Endothelial cell of umbilical vein (primary cell): ENCODE measurements at regions of chr17 and their contacts with region 1.

Region 1: DNA sequence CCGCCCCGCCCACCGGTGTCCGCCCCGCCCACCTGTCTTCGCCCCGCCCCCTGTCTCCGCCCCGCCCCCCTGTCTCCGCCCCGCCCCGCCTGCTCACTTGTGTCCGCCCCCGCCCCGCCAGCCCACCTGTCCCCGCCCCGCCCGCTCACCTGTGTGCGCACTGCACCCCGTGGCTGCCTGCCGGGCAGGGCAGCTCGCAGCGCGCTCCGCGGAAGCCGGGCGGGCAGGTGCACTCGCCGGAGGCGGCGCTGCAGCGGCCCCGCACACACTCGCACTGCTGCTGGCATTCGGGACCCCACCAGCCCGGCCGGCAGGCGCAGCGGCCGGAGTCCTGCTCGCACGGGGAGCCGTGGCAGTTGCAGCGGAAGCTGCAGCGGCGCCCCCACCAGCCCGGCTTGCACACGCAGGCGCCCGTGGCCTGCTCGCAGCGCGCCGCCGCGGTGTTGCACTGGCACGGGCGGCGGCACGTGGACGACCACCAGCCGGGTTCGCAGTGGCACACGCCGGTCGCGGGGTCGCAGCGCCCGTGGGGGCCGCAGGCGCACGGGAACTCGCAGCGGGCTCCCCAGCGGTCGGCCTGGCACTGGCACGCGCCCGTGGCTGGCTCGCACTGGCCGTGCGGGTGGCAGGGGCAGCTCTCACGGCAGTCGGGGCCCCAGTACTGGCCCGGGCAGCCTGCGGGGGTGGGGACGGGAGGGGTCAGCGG is 2.1 kb downstream of the SCARF1 start:
- DNase-seq: no peak
- H3K4me3 ChIP-seq: peak overlapping the region in 1 of 3 experiments; percentile 78
- H3K27ac ChIP-seq: peak overlapping the region; percentile 72
- H3K4me1 ChIP-seq: peaks cover 35% of the 10 kb centered on the region
- H3K27me3 ChIP-seq: no peaks in the 10 kb centered on the region
- CTCF ChIP-seq: peak; percentile 16 to 29
- POLR2A ChIP-seq: no peak

Region 2: DNA sequence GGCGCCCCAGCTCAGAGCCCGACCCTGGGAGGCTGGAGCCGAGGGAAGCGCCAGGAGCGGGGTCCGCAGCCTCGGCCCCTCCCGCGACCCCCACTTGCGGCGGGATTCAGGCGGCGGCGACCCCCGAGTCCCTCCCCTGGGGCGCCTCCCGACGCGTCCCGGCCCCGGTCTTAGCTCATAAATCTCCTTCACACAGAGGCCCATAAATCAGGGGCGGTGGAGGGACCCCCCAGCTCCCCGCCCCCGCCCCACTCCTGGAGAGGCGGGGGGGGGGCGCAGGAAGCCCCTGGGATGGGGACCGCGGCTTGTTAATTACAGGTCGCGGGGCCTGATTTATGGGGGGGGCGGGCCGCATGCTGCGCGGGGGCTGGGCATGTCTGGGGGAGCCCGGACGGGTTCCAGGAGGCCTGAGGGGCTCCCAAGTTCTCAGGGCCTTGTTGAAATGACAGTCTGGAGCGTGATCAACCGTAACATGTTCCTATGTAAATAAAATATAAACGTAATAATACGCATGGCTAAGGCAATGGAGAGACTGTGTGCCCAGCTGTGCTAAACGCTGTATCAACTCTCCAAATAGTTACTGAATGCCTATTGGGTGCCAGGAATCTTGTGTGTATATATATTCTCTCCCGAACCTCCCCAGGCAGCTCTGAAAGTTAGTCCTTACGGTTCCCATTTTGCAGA is 383.2 kb before region 1 on chr17:
- CTCF ChIA-PET with region 1: interaction called, 16 read pairs
- POLR2A ChIA-PET with region 1: no interaction called
- dilution Hi-C with region 1: no loop called
- intact Hi-C with region 1: loop called (anchors 1 kb)
- DNase-seq: no peak
- H3K4me3 ChIP-seq: peak overlapping the region in 2 of 3 experiments; percentile 31 to 32
- H3K27ac ChIP-seq: no peak overlapping the region
- H3K4me1 ChIP-seq: no peaks in the 10 kb centered on the region
- H3K27me3 ChIP-seq: peaks cover 2 to 3% of the 10 kb centered on the region in 2 experiments
- CTCF ChIP-seq: no peak
- POLR2A ChIP-seq: no peak

Region 3: GRCh38 chr17:1474402-1475189 is 168.8 kb before region 1 on chr17:
- CTCF ChIA-PET with region 1: no interaction called
- POLR2A ChIA-PET with region 1: no interaction called
- dilution Hi-C with region 1: no loop called
- intact Hi-C with region 1: no loop called
- DNase-seq: no peak
- H3K4me3 ChIP-seq: no peak overlapping the region
- H3K27ac ChIP-seq: no peak overlapping the region
- H3K4me1 ChIP-seq: no peaks in the 10 kb centered on the region
- H3K27me3 ChIP-seq: no peaks in the 10 kb centered on the region
- CTCF ChIP-seq: no peak
- POLR2A ChIP-seq: no peak

Region 4: DNA sequence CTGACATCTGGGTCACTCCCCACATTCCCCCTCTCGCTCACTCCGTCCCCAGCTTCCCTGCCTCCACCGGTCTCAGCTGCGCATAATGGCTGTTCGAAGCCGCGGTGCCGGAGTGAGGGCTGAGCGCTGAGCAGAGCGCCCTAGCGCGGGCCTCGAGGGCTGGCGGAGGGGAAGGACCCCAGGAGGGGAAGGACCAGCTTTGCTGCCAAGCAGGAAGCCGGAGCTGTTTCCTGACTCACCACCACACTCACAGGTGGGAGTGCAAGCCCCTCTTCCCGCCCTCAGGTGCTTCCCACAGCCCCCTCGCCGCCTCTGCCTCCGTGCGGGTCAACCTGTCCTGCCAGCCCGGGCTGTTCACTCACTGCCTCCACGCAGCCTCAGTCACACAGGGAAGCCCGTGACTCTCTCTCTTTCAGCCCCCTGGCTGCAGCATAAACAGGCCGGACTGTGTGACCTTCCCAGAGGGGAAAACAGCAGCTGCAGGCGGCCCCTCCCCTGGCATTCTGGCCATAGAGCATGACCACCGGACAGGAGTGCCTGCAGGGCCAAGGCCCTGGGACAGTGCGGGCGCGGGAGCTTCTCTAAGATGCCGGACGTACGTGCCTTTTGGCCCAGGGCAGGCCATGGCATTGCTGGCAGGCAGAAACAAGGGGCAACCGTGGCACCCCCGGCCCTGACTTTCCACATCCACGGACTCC is 38.5 kb before region 1 on chr17:
- CTCF ChIA-PET with region 1: interaction called, 4 read pairs
- POLR2A ChIA-PET with region 1: interaction called, 12 read pairs
- dilution Hi-C with region 1: no loop called
- intact Hi-C with region 1: no loop called
- DNase-seq: no peak
- H3K4me3 ChIP-seq: no peak overlapping the region
- H3K27ac ChIP-seq: no peak overlapping the region
- H3K4me1 ChIP-seq: no peaks in the 10 kb centered on the region
- H3K27me3 ChIP-seq: no peaks in the 10 kb centered on the region
- CTCF ChIP-seq: no peak
- POLR2A ChIP-seq: no peak

Region 5: DNA sequence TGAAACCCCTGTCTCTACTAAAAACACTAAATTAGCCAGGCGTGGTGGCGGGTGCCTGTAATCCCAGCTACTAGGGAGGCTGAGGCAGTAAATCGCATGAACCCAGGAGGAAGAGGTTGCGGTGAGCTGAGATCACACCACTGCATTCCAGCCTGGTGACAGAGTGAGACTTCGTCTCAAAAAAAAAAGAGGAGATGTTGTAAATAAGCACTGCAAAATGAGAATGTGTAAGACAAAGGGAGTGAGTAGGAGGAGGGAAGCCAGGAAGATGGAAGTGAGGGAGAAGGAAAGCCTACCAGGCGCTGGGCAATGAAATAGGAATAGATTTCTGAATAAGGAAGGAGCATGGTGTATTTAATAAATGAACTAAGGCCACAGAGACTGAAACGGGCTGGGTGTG is 49.9 kb after region 1 on chr17:
- CTCF ChIA-PET with region 1: no interaction called
- POLR2A ChIA-PET with region 1: no interaction called
- dilution Hi-C with region 1: no loop called
- intact Hi-C with region 1: no loop called
- DNase-seq: no peak
- H3K4me3 ChIP-seq: no peak overlapping the region
- H3K27ac ChIP-seq: no peak overlapping the region
- H3K4me1 ChIP-seq: peaks cover 5% of the 10 kb centered on the region
- H3K27me3 ChIP-seq: no peaks in the 10 kb centered on the region
- CTCF ChIP-seq: no peak
- POLR2A ChIP-seq: no peak